Gastrocnemius medialis (tissue), 4 donors: ENCODE measurements at regions of chr17 and their contacts with region 1.

Region 1: DNA sequence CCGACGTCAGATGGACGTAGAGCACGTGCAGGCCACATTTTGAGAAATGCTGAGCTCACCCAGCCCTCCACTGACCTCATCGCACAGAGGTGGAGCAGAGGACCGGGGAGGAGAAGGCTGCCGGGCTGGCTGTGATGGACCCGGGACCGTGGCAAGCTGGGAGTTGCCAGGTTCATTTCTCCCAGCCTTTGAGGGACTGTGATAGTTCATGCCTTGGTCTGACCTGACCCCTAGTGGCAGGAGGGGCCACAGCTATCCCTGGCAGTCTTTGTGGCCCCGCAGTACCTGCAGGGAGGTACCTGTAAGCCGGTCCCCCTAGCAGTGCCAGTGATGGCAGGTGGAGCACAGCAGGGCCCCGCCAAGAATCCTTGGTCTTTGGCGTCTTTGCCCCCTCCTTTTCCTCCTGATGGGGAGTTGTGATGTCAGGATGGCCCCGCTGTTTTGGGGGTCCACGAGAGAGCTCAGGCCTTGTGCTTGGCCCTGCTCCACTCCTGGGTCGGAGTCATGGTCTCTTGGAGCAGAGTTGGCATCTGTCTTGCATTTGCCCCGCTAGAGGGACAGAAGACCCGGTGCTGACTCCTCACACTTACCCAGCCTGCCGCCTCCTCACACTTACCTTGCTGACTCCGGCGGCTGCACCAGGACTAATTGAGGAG is 50.4 kb downstream of the OR1D5 start:
- DNase-seq: peak; percentile 43 to 61
- ATAC-seq: peak; percentile 84 to 90
- H3K4me3 ChIP-seq: no peak overlapping the region
- H3K27ac ChIP-seq: no peak overlapping the region
- H3K4me1 ChIP-seq: no peaks in the 10 kb centered on the region
- H3K27me3 ChIP-seq: no peaks in the 10 kb centered on the region
- CTCF ChIP-seq: peak; percentile 86 to 94 (median 91)
- POLR2A ChIP-seq: no peak

Region 2: DNA sequence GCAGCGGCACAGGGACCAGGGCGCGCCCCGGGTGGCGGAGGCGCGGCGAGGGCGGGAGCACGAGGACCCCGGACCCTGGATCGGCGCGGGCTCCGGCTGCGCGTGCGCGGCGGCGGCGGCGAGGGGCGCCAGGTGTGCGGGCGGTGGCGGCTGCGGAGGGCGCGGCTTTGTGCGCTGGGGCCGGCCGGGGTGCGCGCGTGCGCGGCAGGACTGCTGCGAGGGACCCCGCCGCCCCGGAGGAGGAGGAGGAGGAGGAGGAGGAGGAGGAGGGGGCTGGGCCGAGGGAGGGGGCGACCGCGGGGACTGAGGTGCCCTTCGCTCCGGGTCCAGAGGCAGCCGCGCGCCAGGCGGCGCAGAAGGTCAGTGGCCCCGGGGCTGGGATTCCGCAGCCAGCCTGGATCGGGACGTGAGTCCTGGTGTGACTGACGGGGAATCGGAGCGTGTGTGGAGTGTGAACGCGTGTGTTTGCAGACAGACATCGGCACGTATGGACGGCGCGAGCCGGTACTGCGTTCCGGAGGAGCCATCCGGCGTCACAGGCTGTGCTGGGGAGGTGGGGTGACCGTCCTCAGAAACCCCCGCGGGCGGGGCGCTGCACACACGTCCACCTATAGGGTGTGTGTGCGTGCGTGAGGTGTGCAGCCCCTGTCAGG is 236.3 kb before region 1 on chr17:
- in situ Hi-C with region 1: no loop called
- intact Hi-C with region 1: no loop called
- DNase-seq: no peak
- ATAC-seq: no peak
- H3K4me3 ChIP-seq: peak overlapping the region in 2 of 4 donors; percentile 7 to 21
- H3K27ac ChIP-seq: no peak overlapping the region
- H3K4me1 ChIP-seq: no peaks in the 10 kb centered on the region
- H3K27me3 ChIP-seq: peaks cover 23 to 34% (median 28%) of the 10 kb centered on the region in 3 donors
- CTCF ChIP-seq: no peak
- POLR2A ChIP-seq: no peak

Region 3: DNA sequence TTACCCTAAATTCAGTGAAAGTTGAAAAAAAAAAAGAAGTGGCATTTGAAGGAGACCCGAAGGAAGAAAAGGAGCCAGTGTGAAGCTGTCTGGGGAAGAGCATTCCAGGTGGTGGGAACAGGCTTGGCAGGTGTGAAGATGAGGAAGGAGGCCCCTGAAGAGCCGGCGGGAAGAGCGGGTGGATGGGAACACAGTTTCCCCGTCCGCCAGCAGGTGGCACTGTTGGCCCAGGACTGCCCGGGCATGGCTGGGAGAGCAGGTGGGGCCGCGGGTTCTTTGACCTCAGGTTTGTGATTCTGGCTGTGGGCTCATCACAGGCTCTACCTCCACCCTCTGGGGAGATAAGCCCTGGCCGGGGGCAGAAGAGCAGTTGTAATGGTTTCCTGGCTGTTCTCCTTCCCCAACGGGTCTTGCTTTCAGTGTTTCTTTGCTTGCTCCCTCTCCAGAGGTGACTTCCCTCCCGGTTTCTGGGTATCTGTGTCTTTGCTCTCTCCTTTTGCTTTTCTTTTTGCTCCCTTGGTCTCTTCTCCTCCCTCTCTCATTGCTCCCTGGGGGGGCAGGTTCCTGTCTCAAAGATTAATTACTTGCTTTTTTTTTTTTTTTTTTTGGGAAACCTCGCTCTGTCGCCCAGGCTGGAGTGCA is 184.5 kb before region 1 on chr17:
- in situ Hi-C with region 1: loop called in 2 of 4 experiments (anchors 5 to 10 kb)
- intact Hi-C with region 1: loop called (anchors 1 kb)
- DNase-seq: peak in 1 of 2 donors; percentile 12
- ATAC-seq: no peak
- H3K4me3 ChIP-seq: no peak overlapping the region
- H3K27ac ChIP-seq: no peak overlapping the region
- H3K4me1 ChIP-seq: no peaks in the 10 kb centered on the region
- H3K27me3 ChIP-seq: peaks cover 0 to 3% (median under 1%) of the 10 kb centered on the region in 3 donors
- CTCF ChIP-seq: peak; percentile 60 to 87 (median 85)
- POLR2A ChIP-seq: no peak

Region 4: DNA sequence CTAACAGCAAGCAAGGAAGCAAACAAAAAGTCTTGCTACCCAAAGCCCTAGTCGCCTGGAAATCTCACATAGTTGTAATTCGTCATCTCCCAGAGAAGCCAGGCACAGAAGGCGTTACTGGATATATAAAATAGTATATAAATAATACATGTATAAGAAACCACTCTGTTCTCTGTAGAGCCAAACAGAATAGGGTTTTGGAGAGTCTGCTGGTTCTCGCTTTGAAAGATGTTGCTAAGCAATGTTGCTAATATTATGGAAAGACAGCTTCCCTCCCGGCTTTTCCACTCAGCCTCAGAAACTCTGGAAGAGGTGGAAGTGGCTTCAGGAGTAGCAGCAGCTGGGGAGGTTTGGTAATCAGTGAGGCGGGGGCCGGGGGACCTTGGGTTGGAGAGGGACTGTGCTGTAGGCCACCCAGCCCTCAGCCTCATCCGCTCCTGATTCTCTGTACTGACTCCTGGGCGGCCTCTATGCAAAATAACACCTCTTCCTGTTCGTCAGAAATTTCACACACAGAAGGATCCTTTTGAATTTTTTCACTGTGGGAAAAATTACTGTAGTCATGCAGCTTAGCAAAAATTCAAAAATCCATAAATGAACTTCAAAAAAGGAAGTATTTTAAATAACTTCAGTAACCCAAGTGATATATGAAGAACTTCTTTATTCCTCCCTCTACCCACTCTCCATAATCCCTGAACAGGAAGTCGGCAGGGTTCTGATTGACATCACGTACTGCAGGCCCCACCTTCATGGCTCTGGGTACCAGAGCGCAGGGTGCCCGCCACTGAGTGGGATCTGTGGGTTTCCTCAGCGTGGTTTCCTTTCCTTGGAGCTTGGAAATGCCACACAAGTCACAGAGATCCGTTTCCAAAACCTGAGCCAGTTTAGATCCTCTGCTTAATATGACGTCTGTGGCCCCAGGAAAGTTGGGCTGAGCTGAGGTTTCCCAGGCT is 165.4 kb before region 1 on chr17:
- in situ Hi-C with region 1: loop called in 3 of 4 experiments (anchors 5 to 10 kb)
- intact Hi-C with region 1: loop called (anchors 1 kb)
- DNase-seq: no peak
- ATAC-seq: no peak
- H3K4me3 ChIP-seq: no peak overlapping the region
- H3K27ac ChIP-seq: no peak overlapping the region
- H3K4me1 ChIP-seq: peaks cover 0 to 7% of the 10 kb centered on the region in 2 donors
- H3K27me3 ChIP-seq: peaks cover 0 to 5% (median 5%) of the 10 kb centered on the region in 3 donors
- CTCF ChIP-seq: no peak
- POLR2A ChIP-seq: no peak

Region 5: GRCh38 chr17:2853111-2853721 is 159.8 kb before region 1 on chr17:
- in situ Hi-C with region 1: loop called in 3 of 4 experiments (anchors 5 to 10 kb)
- intact Hi-C with region 1: loop called (anchors 1 kb)
- DNase-seq: peak in 1 of 2 donors; percentile 24
- ATAC-seq: peak; percentile 40 to 52
- H3K4me3 ChIP-seq: peak overlapping the region; percentile 54 to 71 (median 60)
- H3K27ac ChIP-seq: peak overlapping the region in 3 of 4 donors; percentile 58 to 63 (median 59)
- H3K4me1 ChIP-seq: peaks cover 8 to 13% of the 10 kb centered on the region in 2 donors
- H3K27me3 ChIP-seq: peaks cover 11 to 36% (median 34%) of the 10 kb centered on the region in 3 donors
- CTCF ChIP-seq: no peak
- POLR2A ChIP-seq: no peak

Region 6: DNA sequence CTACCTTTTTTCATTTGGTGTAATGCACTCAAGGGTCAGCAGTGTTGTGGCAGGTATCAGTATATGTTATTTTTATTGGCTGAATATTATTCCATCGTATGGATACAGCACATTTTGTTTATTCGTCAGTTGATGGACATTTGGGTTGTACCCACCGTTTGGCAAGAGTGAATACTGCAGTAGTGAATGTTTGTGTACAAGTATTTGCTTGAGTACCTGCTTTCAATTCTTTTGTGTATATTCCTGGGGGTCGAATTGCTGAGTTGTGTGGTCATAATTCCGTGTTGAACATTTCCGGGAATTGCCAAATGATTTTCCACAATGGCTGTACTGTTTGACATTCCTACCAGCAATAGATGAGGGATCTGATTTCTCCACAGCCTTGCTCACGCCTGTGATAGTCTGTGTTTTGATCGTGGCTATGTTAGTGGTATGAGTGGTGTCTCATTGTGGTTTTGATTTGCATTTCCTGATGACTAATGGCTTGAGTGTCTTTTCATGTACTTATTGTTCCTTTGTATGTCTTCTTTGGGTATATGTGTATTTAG is 58.1 kb before region 1 on chr17:
- in situ Hi-C with region 1: no loop called
- intact Hi-C with region 1: loop called (anchors 2 kb)
- DNase-seq: no peak
- ATAC-seq: no peak
- H3K4me3 ChIP-seq: no peak overlapping the region
- H3K27ac ChIP-seq: no peak overlapping the region
- H3K4me1 ChIP-seq: no peaks in the 10 kb centered on the region
- H3K27me3 ChIP-seq: no peaks in the 10 kb centered on the region
- CTCF ChIP-seq: no peak
- POLR2A ChIP-seq: no peak

Region 7: DNA sequence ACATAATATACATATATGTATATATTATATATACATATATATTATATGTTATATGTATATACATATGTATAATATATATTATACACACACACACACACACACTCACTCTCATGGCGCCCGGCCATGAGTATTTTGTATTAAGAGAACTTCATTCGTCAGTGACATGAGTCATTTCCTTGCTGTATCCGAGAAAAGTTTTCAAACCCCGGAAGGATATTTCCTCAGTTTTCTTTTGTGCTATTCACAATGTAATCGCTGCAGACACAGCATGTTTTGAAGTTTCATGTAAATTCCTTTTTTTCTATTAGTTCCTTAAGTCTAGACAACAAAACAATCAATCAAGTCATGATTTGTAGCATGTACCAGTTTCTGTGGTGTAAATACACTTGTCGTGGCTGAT is 17.0 kb after region 1 on chr17:
- in situ Hi-C with region 1: no loop called
- intact Hi-C with region 1: no loop called
- DNase-seq: no peak
- ATAC-seq: peak in 1 of 2 donors; percentile 52
- H3K4me3 ChIP-seq: no peak overlapping the region
- H3K27ac ChIP-seq: peak overlapping the region in 3 of 4 donors; percentile 62 to 70 (median 66)
- H3K4me1 ChIP-seq: peaks cover 0 to 5% of the 10 kb centered on the region in 2 donors
- H3K27me3 ChIP-seq: no peaks in the 10 kb centered on the region
- CTCF ChIP-seq: no peak
- POLR2A ChIP-seq: no peak